Calu3 (cell line): ENCODE measurements at regions of chr2 and their contacts with region 1.

Region 1: DNA sequence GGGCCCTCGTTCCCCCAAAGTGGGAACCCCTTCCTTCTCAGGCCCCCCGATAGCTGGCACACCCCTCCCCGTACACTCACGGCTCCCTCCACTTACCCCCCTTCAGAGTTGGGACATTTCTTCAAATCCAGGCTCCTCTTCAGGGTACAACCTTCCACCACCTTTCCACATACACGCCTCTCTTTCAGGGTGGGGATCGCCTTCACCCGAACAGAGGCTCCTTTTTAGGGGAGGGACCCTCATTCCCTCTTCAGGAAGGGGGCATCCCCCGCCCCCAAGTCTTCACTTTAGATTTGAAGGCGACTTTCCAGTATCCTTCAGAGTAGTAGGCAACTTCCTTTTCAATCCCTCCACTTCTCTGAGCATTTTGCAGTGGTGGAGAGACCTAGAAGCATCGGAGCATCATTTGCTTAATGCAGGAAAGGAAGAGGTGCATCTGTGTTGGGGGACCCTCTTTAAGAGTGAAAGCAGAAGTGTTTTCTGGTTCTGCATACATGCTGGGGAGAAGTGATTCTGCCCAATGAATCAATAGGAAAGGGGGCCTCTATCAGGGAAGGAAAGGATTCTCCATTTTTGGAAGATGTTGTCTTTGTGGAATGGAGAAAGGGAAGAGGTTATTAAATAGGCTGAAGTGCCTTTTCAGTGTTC is 845 bp downstream of the EML4 start:
- DNase-seq: no peak
- H3K4me3 Mint-ChIP-seq: no peak overlapping the region
- H3K27ac Mint-ChIP-seq: no peak overlapping the region
- H3K4me1 Mint-ChIP-seq: peaks cover 9% of the 10 kb centered on the region
- H3K27me3 Mint-ChIP-seq: no peaks in the 10 kb centered on the region
- CTCF ChIP-seq: no peak

Region 2: GRCh38 chr2:42147641-42148274 is 22.2 kb before region 1 on chr2:
- CTCF ChIA-PET with region 1: no interaction called
- intact Hi-C with region 1: loop called (anchors 2 kb)
- DNase-seq: no peak
- H3K4me3 Mint-ChIP-seq: no peak overlapping the region
- H3K27ac Mint-ChIP-seq: no peak overlapping the region
- H3K4me1 Mint-ChIP-seq: peaks cover 6% of the 10 kb centered on the region
- H3K27me3 Mint-ChIP-seq: no peaks in the 10 kb centered on the region
- CTCF ChIP-seq: no peak

Region 3: DNA sequence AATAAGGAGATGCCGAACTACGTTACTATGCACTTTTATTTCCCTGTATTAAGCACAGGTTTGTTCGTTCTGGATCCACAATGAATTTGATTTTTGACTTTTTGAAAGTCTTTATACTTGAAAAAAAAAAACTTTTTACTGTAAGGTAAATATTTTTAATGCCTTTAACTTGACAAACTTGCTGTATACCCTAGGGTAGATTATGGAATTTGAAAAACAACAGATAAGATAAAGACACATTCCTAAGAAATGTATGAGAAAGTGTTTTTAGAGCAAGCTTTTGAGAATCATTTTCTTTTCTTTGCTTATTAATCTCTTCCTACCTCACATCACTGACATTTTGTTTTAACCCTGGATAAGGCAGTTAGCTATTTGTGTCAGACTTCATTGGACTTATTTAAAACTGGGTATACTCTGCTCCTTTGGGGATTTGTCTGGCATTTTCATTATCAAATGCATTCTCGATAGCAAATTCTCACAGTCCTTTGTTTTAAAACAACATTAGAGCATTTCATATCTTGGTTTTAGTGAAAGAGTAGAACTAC is 16.3 kb after region 1 on chr2:
- CTCF ChIA-PET with region 1: no interaction called
- intact Hi-C with region 1: loop called (anchors 2 kb)
- DNase-seq: no peak
- H3K4me3 Mint-ChIP-seq: no peak overlapping the region
- H3K27ac Mint-ChIP-seq: no peak overlapping the region
- H3K4me1 Mint-ChIP-seq: peaks cover 46% of the 10 kb centered on the region
- H3K27me3 Mint-ChIP-seq: no peaks in the 10 kb centered on the region
- CTCF ChIP-seq: no peak

Region 4: DNA sequence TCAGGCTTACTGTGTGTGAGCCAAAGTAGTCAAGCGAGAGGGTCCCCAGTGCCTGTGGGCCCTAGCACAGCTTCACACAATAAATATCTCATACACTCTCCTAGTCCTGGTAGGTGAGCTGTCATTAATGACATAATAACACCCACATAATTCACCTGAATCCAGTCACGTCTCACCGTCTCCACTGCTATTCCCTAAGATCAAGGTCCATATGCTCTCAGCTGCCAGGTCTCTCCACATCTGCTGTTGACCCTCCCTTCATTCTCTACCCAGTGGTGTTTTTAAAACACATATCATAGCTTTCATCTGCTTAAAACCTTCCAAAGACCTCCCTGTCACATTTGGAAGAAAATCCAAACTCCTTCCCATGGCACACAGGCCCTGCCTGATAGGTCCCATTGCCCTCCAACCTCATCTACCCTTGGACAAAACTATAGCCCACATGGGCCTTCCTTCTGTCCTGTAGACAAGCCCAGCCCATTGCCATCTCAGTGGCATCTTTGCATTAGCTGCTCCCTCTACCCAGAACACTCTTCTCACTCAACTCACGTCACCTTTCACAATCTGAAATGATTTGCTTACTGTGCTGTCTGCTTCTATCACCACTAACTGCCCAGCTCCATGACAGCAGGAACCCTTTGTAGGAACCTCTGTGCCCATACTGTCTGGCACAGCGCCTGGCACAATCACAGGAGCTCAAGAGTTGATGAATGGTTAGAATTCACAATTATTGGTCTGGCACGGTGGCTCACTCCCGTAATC is 316.3 kb after region 1 on chr2:
- CTCF ChIA-PET with region 1: no interaction called
- intact Hi-C with region 1: no loop called
- DNase-seq: no peak
- H3K4me3 Mint-ChIP-seq: no peak overlapping the region
- H3K27ac Mint-ChIP-seq: no peak overlapping the region
- H3K4me1 Mint-ChIP-seq: no peaks in the 10 kb centered on the region
- H3K27me3 Mint-ChIP-seq: no peaks in the 10 kb centered on the region
- CTCF ChIP-seq: no peak